AG04450 (cell line): ENCODE measurements at regions of chr17 and their contacts with region 1.

Region 1: GRCh38 chr17:12545877-12546513 is 119.7 kb upstream of the MYOCD start:
- DNase-seq: no peak
- H3K4me3 ChIP-seq: no peak overlapping the region
- H3K27ac ChIP-seq: no peak overlapping the region
- H3K27me3 ChIP-seq: no peaks in the 10 kb centered on the region
- CTCF ChIP-seq: peak; percentile 87

Region 2: GRCh38 chr17:12256380-12256995 is 289.5 kb before region 1 on chr17:
- CTCF ChIA-PET with region 1: interaction called, 19 read pairs
- POLR2A ChIA-PET with region 1: no interaction called
- DNase-seq: peak; percentile 56
- H3K4me3 ChIP-seq: no peak overlapping the region
- H3K27ac ChIP-seq: no peak overlapping the region
- H3K27me3 ChIP-seq: no peaks in the 10 kb centered on the region
- CTCF ChIP-seq: peak; percentile 79

Region 3: GRCh38 chr17:12510535-12510934 is 35.5 kb before region 1 on chr17:
- CTCF ChIA-PET with region 1: interaction called, 18 read pairs
- POLR2A ChIA-PET with region 1: no interaction called
- DNase-seq: peak; percentile 23
- H3K4me3 ChIP-seq: no peak overlapping the region
- H3K27ac ChIP-seq: peak overlapping the region; percentile 47
- H3K27me3 ChIP-seq: no peaks in the 10 kb centered on the region
- CTCF ChIP-seq: no peak

Region 4: GRCh38 chr17:12530161-12530560 is 15.8 kb before region 1 on chr17:
- CTCF ChIA-PET with region 1: interaction called, 30 read pairs
- POLR2A ChIA-PET with region 1: no interaction called
- DNase-seq: no peak
- H3K4me3 ChIP-seq: no peak overlapping the region
- H3K27ac ChIP-seq: no peak overlapping the region
- H3K27me3 ChIP-seq: no peaks in the 10 kb centered on the region
- CTCF ChIP-seq: no peak

Region 5: DNA sequence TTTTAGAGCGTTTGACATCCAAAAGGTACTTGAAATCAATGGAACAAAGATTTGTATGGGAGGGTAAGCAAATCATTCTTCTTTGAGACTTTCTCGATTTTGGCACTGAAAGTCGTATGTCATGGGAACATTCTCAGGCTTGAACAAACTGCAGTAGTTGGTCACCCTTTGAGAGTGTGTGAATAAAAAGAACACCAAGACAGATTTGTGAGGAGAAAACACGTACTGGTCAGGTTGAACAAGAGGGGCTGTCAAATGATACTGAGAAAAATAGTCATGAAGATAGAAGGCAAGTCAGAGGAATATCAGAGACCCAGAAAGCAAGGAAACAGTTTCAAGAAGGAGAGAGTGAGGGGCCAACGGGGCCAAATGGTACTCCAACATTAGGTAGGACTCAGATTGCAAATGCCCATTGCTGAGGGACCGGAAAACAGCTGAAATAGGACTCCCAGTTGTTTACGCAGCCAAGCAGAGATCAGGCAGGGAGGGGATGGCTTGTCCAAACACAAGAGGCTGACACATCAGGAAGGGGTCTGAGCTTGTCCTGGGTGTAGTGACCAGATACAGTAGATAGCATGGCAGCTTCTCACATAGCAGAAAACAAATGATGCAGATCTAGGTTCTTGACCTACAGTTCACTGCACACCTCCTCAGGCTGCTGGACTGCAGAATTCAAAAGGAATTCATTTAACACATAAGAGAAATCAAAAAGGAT is 45.2 kb after region 1 on chr17:
- CTCF ChIA-PET with region 1: interaction called, 15 read pairs
- POLR2A ChIA-PET with region 1: no interaction called
- DNase-seq: no peak
- H3K4me3 ChIP-seq: no peak overlapping the region
- H3K27ac ChIP-seq: no peak overlapping the region
- H3K27me3 ChIP-seq: no peaks in the 10 kb centered on the region
- CTCF ChIP-seq: no peak

Region 6: DNA sequence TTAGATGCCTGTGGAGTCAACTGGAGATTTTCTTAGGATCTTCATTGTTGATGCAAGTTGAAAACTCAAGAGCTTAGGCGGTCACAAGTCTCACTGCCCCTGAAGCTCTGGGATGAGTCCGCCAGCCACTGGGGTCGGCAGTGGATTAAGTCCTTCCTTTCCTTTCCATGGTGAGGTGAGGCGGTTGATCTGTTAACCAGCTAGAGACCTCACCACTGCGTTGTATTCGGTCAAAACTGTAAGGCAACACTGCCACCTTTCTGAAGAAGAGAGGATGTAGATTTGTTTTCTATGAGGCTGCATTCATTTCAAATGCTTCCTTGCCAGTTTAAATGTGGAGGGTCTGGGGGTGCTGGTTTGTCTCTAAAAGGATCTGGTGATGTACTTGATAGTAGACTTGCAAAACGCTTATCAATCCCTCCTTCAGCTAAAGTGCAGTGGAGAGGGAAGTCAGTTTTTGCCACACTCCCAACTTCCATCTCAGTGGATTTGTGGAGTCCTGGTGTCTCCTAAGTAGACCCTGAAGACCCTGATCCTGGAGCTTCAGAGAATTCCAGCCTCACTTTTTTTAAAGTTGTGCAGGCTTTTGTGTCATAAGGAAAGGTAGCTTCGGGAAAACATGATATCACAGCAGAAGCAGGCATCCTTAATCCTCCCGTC is 121.4 kb after region 1 on chr17:
- CTCF ChIA-PET with region 1: interaction called, 74 read pairs
- POLR2A ChIA-PET with region 1: interaction called, 3 read pairs
- DNase-seq: peak; percentile 70
- H3K4me3 ChIP-seq: peak overlapping the region; percentile 77
- H3K27ac ChIP-seq: peak overlapping the region; percentile 25
- H3K27me3 ChIP-seq: no peaks in the 10 kb centered on the region
- CTCF ChIP-seq: peak; percentile 75